Activated naive CD4-positive, alpha-beta T cell treated with anti-CD3 and anti-CD28 coated beads for 36 hours (primary cell): ENCODE measurements at regions of chr18 and their contacts with region 1.

Region 1: DNA sequence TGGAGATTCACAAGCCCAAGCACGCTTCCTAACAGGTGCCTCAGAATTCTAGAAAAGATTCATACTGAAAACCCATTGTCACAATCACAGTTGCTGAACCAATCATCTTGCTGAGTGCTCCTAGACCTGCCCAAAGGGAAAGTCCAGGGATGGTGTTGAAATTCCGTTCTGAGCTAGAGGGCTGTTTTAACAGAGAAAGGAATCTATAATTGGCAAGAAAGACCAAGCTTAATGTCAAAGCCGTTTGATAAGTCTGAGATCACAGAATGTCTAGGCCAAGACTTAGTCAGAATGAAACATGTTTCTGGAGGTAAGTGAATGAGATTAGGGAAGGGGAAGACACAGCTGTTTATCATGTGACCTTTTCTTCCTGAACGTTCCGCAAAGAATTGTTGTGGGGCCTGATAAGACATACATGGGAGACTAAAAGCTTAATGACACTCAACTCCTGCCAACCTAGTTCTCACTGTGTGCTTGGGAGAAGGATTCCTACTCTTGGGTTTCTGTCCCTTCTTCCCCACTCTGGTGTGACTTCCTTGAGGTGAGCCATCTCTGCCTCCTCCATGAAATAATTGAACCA is 27.5 kb downstream of the PMAIP1 start:
- DNase-seq: peak; percentile 77
- H3K4me3 Mint-ChIP-seq: no peak overlapping the region
- H3K27ac Mint-ChIP-seq: peak overlapping the region; percentile 83
- H3K4me1 Mint-ChIP-seq: peaks cover 32% of the 10 kb centered on the region
- H3K27me3 Mint-ChIP-seq: peaks cover 6% of the 10 kb centered on the region

Region 2: DNA sequence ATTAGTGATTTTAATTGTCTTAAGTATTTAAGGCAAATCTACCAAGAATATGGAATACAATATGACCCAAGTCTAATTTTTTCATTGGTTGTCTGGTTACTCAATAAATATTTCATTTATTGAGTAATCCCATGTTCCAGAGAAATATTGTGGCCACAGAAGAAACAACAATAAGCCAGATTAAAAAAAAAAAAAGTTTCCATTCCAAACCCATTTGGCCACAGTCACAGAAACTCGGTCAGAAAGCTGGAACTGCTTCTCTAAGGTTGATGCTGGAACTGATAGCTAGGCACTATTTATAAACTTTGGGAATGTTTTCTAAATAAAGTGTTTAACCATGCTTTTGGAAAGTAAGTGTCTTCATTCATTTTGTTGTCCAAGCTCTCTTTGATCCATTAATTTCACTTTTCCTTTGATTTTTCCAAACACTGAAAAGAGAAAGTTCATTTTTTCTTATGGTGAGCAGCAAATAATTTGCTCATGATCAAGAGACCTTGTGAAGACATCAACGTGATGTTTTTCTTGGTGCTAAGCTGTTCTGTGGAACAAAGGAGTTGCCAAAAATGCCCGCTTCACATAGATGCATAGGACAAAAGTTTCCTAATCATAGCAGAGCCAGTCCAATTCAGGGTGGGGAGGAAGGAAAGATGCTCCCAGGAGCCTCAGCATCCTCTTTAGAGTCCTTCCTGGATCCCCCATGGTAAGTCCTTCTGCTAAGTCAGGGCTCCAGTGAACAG is 158.0 kb before region 1 on chr18:
- CTCF ChIA-PET with region 1: no interaction called
- intact Hi-C with region 1: no loop called
- DNase-seq: no peak
- H3K4me3 Mint-ChIP-seq: no peak overlapping the region
- H3K27ac Mint-ChIP-seq: no peak overlapping the region
- H3K4me1 Mint-ChIP-seq: no peaks in the 10 kb centered on the region
- H3K27me3 Mint-ChIP-seq: peaks cover 15% of the 10 kb centered on the region

Region 3: GRCh38 chr18:59846814-59847490 is 80.4 kb before region 1 on chr18:
- CTCF ChIA-PET with region 1: no interaction called
- intact Hi-C with region 1: loop called (anchors 1 kb)
- DNase-seq: peak; percentile 83
- H3K4me3 Mint-ChIP-seq: no peak overlapping the region
- H3K27ac Mint-ChIP-seq: peak overlapping the region; percentile 1
- H3K4me1 Mint-ChIP-seq: peaks cover 16% of the 10 kb centered on the region
- H3K27me3 Mint-ChIP-seq: no peaks in the 10 kb centered on the region

Region 4: GRCh38 chr18:59907172-59907571 is 20.2 kb before region 1 on chr18:
- CTCF ChIA-PET with region 1: interaction called, 3 read pairs
- intact Hi-C with region 1: loop called (anchors 1 kb)
- DNase-seq: peak; percentile 36
- H3K4me3 Mint-ChIP-seq: peak overlapping the region; percentile 7
- H3K27ac Mint-ChIP-seq: peak overlapping the region; percentile 80
- H3K4me1 Mint-ChIP-seq: peaks cover 62% of the 10 kb centered on the region
- H3K27me3 Mint-ChIP-seq: no peaks in the 10 kb centered on the region

Region 5: GRCh38 chr18:59950215-59950944 is 23.0 kb after region 1 on chr18:
- CTCF ChIA-PET with region 1: no interaction called
- intact Hi-C with region 1: loop called (anchors 1 kb)
- DNase-seq: peak; percentile 18
- H3K4me3 Mint-ChIP-seq: no peak overlapping the region
- H3K27ac Mint-ChIP-seq: no peak overlapping the region
- H3K4me1 Mint-ChIP-seq: peaks cover 20% of the 10 kb centered on the region
- H3K27me3 Mint-ChIP-seq: no peaks in the 10 kb centered on the region